Activated CD4-positive, alpha-beta memory T cell treated with anti-CD3 and anti-CD28 coated beads for 36 hours (primary cell): ENCODE measurements at regions of chr5 and their contacts with region 1.

Region 1: GRCh38 chr5:132466433-132467286 is 23.9 kb downstream of the IRF1 start:
- DNase-seq: peak; percentile 85
- H3K4me3 Mint-ChIP-seq: peak overlapping the region; percentile 68
- H3K27ac Mint-ChIP-seq: peak overlapping the region; percentile 75
- H3K4me1 Mint-ChIP-seq: peaks cover 86% of the 10 kb centered on the region
- H3K27me3 Mint-ChIP-seq: no peaks in the 10 kb centered on the region

Region 2: DNA sequence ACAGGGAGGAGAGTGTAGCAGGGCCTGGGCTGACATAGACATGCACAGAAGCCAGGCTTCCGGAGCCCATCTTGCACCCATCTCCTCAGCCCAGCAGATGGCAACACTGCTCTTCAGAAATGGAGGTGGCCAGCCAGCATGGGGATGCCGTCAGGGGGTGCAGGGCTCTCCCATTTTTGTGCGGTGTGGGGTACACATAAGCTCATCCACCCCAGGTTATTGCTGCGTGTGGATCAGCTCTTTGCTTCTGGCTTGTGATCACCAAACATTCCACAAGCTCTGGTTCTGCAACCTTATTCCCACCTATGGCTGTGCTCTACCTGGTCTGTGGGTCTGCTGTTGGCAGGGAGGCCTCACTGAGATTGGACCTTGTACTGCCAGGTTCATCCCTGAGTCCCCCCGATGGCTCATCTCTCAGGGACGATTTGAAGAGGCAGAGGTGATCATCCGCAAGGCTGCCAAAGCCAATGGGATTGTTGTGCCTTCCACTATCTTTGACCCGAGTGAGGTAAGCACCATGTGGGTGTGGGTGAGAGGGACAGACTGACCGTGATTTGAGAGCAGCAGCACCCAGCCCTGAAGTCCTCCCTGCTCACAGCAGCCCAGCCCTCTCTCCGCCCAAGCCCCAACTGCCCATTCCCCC is 79.9 kb before region 1 on chr5:
- CTCF ChIA-PET with region 1: interaction called, 25 read pairs
- POLR2A ChIA-PET with region 1: interaction called, 5 read pairs
- intact Hi-C with region 1: no loop called
- DNase-seq: peak; percentile 87
- H3K4me3 Mint-ChIP-seq: no peak overlapping the region
- H3K27ac Mint-ChIP-seq: peak overlapping the region; percentile 14
- H3K4me1 Mint-ChIP-seq: peaks cover 42% of the 10 kb centered on the region
- H3K27me3 Mint-ChIP-seq: no peaks in the 10 kb centered on the region

Region 3: DNA sequence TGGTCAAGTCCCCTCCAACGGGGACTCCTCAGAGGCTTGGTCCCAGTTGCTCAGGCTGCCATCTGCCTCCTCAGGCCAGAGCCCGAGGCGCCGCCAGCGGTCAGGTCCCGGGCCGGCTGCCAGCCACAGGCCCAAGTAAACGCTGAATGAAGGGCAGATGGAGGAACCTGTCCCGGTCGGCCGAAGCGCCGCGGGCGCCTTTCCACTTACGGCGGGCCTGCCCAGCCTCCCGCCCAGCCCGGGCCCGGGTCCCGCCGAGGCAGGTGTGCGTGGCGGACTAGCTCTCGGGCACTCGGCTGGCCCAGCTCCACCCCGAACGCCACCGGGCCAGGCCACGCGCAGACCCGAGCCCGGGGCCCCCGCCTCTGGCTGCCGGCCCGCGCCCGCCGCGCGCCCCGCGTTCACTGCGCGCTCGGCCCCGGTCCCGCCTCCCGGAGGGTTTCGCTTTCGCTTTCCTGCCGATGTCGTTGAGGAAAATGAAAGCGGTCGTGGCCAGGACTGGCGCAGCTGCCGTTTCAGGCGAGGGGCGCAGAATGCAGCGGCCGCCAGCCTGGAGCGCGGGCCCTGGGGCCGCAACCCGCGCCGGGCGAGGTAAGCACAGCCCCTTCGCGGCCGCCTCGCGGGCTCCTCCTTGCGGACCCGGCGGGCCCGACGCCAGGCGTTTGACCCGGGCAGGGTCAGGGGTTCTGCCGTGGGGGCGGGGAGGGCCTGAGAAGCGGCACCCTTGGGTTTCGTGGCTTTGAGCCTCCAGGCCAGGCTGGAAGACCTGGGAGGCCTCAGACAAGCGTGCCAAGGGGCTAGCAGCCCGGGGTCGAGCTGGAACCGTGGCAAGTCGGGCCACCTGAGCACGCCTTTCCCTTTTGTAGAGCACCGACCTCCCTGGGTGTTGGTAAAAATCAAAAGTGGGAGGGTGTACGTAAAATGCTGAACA is 55.9 kb before region 1 on chr5:
- CTCF ChIA-PET with region 1: interaction called, 14 read pairs
- POLR2A ChIA-PET with region 1: interaction called, 15 read pairs
- intact Hi-C with region 1: no loop called
- DNase-seq: peak; percentile 90
- H3K4me3 Mint-ChIP-seq: peak overlapping the region; percentile 93
- H3K27ac Mint-ChIP-seq: peak overlapping the region; percentile 96
- H3K4me1 Mint-ChIP-seq: peaks cover 65% of the 10 kb centered on the region
- H3K27me3 Mint-ChIP-seq: no peaks in the 10 kb centered on the region

Region 4: DNA sequence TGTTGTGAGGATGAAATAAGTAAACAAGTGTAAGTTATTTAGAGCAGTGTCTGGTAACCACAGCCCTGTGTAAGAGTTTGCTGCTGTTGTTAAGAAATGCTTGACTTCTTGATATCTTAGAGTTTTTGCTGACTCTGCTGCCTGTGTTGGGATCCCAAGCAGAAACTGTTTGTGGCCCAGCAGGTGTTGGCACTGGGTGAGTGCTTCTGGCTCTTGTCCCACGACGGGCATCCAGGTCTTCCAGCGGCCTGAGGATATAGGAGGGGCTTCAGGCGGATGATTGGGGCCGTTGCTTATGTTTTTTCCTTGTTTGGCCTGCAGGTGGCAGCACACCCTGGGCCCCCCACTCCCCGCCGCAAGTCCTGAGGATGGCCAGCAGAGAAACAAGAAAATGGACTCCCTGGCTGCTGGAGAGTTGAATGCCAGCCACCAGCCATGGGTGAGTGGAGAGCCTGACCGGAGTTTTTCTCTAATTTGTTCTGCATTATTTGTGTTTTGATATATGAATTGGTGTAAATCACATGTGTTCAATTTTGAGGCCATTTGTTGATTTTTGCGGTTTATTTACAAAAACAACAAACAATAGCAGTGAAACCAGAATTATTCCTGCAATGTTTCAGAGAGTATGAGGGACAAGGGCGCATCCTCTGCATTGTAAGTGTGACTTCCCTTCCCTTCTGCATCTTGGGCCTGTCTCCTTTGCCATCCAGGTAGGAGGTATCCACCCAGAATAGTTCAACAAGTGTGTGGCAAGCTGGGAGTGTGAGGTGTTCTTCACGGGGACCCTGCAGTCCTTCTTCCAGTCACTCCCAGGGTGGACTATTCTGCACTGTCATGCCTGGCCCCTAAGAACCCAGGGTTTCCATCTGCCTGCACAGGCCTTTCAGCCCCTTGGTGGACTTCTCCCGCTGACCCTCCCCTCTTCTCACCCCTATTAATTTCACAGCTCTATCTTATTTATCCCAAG is 46.9 kb before region 1 on chr5:
- CTCF ChIA-PET with region 1: interaction called, 53 read pairs
- POLR2A ChIA-PET with region 1: interaction called, 49 read pairs
- intact Hi-C with region 1: no loop called
- DNase-seq: peak; percentile 78
- H3K4me3 Mint-ChIP-seq: peak overlapping the region; percentile 15
- H3K27ac Mint-ChIP-seq: peak overlapping the region; percentile 83
- H3K4me1 Mint-ChIP-seq: peaks cover 89% of the 10 kb centered on the region
- H3K27me3 Mint-ChIP-seq: no peaks in the 10 kb centered on the region

Region 5: GRCh38 chr5:132437604-132438266 is 28.9 kb before region 1 on chr5:
- CTCF ChIA-PET with region 1: interaction called, 11 read pairs
- POLR2A ChIA-PET with region 1: interaction called, 8 read pairs
- intact Hi-C with region 1: loop called (anchors 1 kb)
- DNase-seq: peak; percentile 83
- H3K4me3 Mint-ChIP-seq: peak overlapping the region; percentile 18
- H3K27ac Mint-ChIP-seq: peak overlapping the region; percentile 78
- H3K4me1 Mint-ChIP-seq: peaks cover 78% of the 10 kb centered on the region
- H3K27me3 Mint-ChIP-seq: no peaks in the 10 kb centered on the region

Region 6: GRCh38 chr5:132446669-132447068 is 20.0 kb before region 1 on chr5:
- CTCF ChIA-PET with region 1: interaction called, 4 read pairs
- POLR2A ChIA-PET with region 1: interaction called, 13 read pairs
- intact Hi-C with region 1: no loop called
- DNase-seq: peak; percentile 8
- H3K4me3 Mint-ChIP-seq: no peak overlapping the region
- H3K27ac Mint-ChIP-seq: no peak overlapping the region
- H3K4me1 Mint-ChIP-seq: peaks cover 63% of the 10 kb centered on the region
- H3K27me3 Mint-ChIP-seq: no peaks in the 10 kb centered on the region

Region 7: DNA sequence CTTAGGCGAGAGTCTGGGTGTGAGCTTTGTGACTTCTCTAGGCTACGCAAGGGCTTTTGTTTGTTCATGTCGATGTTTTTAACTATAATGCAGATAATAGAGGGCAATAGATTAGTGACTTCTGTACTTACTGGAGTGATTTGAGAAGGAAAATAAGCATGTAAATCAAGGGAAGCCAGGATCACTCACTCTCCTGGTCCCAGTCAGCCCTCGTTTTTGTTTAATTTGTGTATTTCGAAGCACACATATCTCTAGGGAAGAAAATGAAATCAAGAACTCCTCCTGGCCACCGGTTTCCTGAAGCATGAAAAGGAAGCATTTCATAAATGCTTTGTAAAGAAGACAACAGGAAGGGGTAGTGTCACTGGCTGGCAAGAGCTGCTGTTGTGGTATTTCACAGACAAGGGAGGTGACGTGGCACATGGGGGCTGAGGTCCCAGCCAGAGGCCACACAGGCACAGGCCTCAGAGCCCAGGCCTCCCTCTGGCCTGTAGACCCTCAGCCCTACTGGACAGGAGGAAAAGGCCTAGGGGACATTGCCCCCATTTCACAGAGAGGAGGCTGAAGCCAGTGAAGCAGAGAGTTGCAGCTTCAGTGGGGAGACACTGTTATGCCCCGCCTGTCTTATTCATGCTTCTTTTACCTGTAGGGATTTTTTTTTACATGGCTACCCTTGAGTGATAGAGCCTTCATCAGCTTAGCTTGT is 10.2 kb before region 1 on chr5:
- CTCF ChIA-PET with region 1: interaction called, 18 read pairs
- POLR2A ChIA-PET with region 1: interaction called, 31 read pairs
- intact Hi-C with region 1: loop called (anchors 1 kb)
- DNase-seq: peak; percentile 76
- H3K4me3 Mint-ChIP-seq: peak overlapping the region; percentile 53
- H3K27ac Mint-ChIP-seq: peak overlapping the region; percentile 92
- H3K4me1 Mint-ChIP-seq: peaks cover 90% of the 10 kb centered on the region
- H3K27me3 Mint-ChIP-seq: no peaks in the 10 kb centered on the region